Left cardiac atrium (tissue), 4 donors: ENCODE measurements at regions of chr13 and their contacts with region 1.

Region 1: DNA sequence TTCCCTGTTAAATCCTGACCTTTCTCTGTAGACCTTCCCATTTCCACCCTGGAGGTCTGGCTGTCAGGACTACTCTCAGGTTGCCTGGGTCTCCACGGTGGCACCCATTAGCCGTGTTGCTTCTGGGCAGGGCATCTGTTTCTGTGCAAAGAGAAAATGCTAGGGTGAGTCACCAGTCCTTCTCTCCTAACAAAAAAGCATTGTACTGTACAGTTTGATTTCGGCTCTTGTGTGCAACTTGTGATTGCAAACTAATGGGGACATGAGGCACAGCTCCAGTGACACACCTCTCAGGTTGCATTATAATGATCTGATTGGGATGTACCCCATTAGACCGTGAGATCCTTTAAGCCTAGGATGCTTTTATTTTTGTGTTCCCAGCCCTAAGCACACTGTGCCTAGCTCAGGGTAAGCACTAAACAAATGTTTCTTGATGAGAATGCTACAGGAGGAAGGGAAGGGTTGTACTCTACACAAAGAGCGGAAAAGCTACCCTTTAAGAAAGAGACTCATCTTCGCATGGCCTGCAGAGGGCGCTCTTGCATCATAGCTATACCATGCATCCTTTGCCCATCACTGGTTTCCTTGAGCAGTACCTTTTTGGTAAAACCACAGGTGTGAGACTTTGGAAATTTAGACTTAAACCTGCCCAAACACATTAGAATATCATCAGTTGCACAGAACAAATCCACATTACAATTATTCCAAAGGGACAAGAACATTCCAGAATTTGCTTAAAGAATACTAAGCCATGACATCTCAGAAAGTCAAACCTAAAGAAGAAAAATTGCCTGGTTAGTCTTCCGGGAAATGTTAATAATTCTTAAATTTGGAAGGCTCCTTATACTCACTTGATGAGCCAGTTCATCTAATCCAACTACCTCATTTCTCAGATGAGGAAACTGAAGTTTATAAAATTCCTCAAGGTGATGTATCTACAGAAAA is 20.3 kb upstream of the TRIM13 start:
- DNase-seq: peak; percentile 72
- ATAC-seq: peak; percentile 61 to 78

Region 2: GRCh38 chr13:50512474-50513299 is 536.1 kb after region 1 on chr13:
- intact Hi-C with region 1: loop called in 1 of 2 experiments (anchors 10 kb)
- DNase-seq: peak; percentile 66
- ATAC-seq: peak; percentile 91

Region 3: GRCh38 chr13:50529154-50529882 is 552.7 kb after region 1 on chr13:
- intact Hi-C with region 1: loop called (anchors 5 to 10 kb)
- DNase-seq: peak; percentile 90
- ATAC-seq: peak; percentile 92 to 96

Region 4: GRCh38 chr13:50801087-50801931 is 824.7 kb after region 1 on chr13:
- intact Hi-C with region 1: loop called in 1 of 2 experiments (anchors 2 kb)
- DNase-seq: peak; percentile 35
- ATAC-seq: peak; percentile 93 to 94

Region 5: DNA sequence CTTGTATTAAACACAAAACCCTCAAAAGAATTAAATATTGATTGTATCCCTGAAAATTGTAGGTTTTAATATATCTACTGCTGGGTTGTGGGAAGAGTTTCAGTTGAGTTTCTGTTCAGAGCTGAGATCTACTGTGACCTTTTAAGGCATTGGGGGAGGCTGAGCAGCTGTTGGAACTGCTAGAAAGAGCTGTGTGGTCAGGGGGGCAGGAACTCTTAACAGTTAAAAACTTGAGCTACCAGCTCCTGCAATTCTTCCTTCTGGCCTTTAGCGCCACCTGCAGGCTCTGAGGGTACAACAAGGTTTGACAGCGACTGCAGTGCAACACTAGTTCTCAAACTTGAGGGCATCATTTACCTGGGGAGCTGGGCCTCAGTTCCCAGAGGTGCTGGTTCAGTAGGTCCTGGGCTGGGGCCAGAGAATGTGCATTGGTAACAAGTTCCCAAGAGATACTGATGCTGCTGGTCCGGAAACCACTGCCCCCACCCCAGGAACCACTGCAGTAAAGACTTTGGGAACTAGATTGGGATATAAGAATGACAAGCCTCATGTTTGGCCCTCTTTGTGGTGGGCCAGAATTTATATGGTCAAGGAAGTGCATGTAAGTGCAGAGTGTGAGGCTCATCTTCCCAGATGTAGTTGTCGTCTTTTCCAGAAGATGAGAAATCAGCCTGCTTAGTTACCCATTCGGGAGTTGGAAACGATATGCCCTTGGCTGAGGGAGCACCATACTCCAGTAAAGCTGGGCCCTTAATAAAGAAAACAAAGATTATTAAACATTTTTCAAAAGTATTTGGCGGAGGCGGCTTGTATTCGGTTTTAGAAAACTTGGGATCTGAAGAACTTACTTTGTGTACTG is 935.6 kb after region 1 on chr13:
- intact Hi-C with region 1: loop called (anchors 5 kb)
- DNase-seq: peak; percentile 89
- ATAC-seq: peak in 1 of 2 donors; percentile 13

Region 6: GRCh38 chr13:51070005-51070649 is 1093.5 kb after region 1 on chr13:
- intact Hi-C with region 1: loop called in 1 of 2 experiments (anchors 5 kb)
- DNase-seq: peak; percentile 81
- ATAC-seq: peak; percentile 85 to 90